ENCODE measurements at regions of chr19 and their contacts with region 1.

Region 1: DNA sequence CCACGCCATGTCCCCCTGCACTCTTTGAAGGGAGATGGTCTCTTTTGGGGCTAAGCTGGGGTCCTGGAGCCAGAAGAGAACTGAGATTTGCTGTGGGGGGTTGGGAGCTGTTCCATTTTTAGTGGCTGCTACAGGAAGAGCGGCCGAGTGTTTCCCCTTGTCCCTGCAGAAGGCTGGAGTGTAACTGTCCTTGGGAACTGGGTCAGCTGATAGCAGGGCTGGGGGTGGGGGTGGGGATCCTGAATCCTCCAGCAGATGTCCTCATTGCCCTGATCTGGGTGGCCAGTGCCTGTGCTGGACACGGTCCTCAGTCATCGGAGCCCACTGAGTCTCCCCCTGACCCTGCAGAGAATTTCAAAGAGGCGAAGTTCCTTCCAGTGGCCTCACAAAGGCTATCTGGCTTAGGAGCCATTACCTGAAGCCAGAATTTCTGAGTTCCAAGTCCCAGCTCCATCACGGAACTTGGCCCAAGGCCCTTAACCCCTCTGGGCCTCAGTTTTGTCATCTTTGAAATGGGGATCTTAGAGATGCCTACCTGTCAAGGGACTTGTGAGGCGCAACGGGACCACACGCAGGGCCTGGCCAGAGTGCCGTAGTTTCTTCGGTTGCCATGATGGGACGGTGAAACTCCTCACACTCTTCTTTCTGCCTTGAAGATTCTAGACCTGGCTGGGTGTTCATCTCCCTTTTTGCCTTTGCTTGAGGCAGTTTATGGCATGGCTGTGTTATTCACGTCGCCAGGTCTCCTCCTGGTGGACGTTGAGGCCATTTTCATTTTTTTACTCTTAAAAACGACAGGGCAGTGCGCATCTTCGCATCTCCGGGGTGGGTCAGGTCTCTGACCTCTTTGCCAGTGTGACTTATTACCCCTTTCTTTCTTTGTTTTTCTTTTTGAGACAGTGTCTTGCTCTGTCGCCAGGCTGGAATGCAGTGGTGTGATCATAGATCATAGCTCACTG is 51.9 kb downstream of the DNM2 start:
- DNase-seq: peak in 5 of 10 donors; percentile 53 to 91 (median 59)

Region 2: GRCh38 chr19:10602330-10603083 is 167.3 kb before region 1 on chr19:
- intact Hi-C with region 1: no loop called
- DNase-seq: peak; percentile 63 to 96 (median 83)

Region 3: GRCh38 chr19:10706990-10707389 is 62.8 kb before region 1 on chr19:
- intact Hi-C with region 1: no loop called
- DNase-seq: no peak

Region 4: DNA sequence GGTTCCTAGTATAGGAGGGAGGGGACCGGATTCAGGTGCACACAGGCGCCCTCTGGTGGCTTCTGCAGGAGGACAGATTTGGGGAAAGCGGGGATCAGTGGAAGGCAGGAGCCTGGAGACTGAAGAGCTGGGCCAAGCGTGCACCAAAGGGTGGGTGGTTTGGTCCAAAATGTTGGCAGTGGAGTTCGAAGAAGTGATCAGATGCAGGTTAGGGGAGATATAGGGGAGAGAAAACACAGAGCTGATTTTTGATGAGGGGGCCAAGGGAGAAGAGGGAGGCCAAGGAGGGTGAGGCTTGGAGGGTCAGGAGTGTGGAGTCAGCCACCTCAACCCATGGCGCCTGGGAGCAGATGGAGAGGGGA is 94.7 kb after region 1 on chr19:
- intact Hi-C with region 1: loop called (anchors 5 kb)
- DNase-seq: peak; percentile 62 to 97 (median 88)

Measured in posterior cingulate gyrus (tissue), 11 donors.